ENCODE measurements at regions of chr3 and their contacts with region 1.

Region 1: DNA sequence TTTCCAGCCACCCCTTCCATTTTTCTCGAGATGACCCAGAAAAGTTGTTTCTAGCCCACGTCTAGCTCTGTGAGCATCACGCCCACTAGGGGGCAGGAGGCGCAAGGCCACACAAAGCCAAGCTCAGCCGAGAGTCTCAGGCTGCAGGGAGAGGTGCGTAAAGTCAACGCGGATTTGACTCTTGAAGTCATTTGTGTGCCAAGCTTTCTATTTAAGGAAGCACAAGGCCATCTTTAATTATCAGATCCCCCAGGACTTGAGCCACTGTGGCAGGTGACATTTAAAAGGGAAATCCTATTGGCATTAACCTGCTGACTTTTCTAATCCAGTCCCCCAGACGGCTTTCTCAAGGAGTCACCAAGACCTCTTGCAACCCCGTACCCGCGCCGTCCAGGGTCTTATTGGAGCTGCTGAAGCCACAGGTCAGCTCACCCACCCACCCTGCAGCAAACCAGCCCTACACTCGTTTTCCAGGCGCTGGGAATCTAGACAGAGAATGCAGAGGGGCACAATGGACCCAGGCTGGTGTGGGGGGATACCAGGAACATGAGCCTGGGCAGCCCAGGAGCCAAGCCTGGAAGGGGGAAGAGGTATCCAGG is 62.1 kb downstream of the CAPN7 start:
- DNase-seq: peak; percentile 90
- H3K4me3 Mint-ChIP-seq: no peak overlapping the region
- H3K27ac Mint-ChIP-seq: no peak overlapping the region
- H3K4me1 Mint-ChIP-seq: peaks cover 67% of the 10 kb centered on the region
- H3K27me3 Mint-ChIP-seq: no peaks in the 10 kb centered on the region

Region 2: GRCh38 chr3:15246186-15246585 is 21.9 kb before region 1 on chr3:
- CTCF ChIA-PET with region 1: no interaction called
- DNase-seq: no peak
- H3K4me3 Mint-ChIP-seq: no peak overlapping the region
- H3K27ac Mint-ChIP-seq: no peak overlapping the region
- H3K4me1 Mint-ChIP-seq: peaks cover 5% of the 10 kb centered on the region
- H3K27me3 Mint-ChIP-seq: no peaks in the 10 kb centered on the region

Region 3: DNA sequence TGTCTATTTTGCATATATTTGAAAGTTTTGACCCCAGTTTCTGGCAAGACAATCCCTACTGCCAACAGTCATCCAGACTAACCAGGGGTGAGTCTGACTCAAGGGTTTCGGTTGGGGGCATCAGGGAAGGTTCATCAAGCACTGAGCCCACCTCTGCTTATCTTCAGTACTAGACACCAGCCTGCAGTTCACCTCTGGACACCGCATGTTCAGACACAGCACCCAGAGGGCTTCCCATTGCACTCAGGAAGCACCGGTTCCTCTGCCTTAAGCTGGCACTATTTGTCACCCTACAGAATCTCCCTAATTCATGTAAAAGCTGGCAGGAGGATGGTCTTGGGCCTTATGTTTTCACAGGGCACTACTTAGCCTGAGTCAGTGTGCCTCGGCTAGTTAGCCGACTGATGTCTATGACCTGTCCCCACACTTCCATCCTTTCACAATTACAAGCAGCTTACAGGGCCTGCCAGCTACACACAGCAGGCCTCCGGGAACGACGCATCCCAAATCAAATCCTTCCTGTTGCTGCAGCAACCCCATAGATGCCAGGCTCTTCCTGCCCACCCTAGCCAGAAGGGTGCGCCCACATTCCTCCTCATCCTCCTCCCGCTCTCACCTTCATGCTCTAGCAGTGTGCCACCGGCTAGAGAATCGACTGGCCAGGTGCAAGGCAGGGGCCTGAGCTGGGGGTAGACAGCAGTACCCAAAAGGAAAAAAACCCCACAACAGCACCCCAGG is 11.7 kb after region 1 on chr3:
- CTCF ChIA-PET with region 1: interaction called, 18 read pairs
- DNase-seq: no peak
- H3K4me3 Mint-ChIP-seq: no peak overlapping the region
- H3K27ac Mint-ChIP-seq: no peak overlapping the region
- H3K4me1 Mint-ChIP-seq: peaks cover 52% of the 10 kb centered on the region
- H3K27me3 Mint-ChIP-seq: peaks cover 4% of the 10 kb centered on the region

Region 4: GRCh38 chr3:15309662-15310335 is 41.7 kb after region 1 on chr3:
- CTCF ChIA-PET with region 1: interaction called, 14 read pairs
- DNase-seq: no peak
- H3K4me3 Mint-ChIP-seq: no peak overlapping the region
- H3K27ac Mint-ChIP-seq: peak overlapping the region; percentile 93
- H3K4me1 Mint-ChIP-seq: peaks cover 76% of the 10 kb centered on the region
- H3K27me3 Mint-ChIP-seq: no peaks in the 10 kb centered on the region

Region 5: DNA sequence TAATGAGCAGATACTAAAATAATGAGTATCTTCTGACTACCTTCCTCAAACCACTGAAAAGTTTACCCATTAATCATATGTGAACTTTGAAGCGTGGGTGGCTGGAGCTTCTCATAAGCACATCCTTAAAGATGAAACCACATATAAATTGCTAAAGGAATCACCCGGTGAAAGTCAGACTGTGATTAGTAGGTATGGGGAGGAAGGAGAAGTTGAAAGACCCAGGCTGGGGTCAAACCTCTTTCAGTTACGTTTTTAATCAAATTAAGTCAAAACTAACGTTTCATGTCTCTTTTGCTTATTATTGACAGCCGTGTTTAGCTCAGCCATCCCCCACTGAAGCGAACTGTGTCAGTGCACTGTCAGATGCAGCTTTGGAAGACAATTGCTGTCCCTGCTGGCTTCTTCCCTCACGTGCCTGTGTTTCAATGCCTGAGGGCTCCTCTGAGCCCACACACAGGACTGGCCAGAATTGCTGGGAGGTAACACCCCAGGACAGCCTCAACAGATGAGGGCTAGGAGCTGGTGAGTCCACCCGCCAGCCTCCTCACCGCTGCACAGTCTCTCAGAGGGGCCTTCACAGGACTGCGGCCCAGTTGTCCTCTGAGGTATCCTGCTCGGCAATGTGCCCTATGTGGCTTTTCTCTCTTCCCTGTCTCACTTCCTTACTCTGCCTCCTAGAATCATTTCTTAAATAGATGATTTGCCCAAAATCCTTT is 93.5 kb after region 1 on chr3:
- CTCF ChIA-PET with region 1: interaction called, 15 read pairs
- DNase-seq: peak; percentile 46
- H3K4me3 Mint-ChIP-seq: no peak overlapping the region
- H3K27ac Mint-ChIP-seq: peak overlapping the region; percentile 82
- H3K4me1 Mint-ChIP-seq: peaks cover 54% of the 10 kb centered on the region
- H3K27me3 Mint-ChIP-seq: no peaks in the 10 kb centered on the region

Region 6: DNA sequence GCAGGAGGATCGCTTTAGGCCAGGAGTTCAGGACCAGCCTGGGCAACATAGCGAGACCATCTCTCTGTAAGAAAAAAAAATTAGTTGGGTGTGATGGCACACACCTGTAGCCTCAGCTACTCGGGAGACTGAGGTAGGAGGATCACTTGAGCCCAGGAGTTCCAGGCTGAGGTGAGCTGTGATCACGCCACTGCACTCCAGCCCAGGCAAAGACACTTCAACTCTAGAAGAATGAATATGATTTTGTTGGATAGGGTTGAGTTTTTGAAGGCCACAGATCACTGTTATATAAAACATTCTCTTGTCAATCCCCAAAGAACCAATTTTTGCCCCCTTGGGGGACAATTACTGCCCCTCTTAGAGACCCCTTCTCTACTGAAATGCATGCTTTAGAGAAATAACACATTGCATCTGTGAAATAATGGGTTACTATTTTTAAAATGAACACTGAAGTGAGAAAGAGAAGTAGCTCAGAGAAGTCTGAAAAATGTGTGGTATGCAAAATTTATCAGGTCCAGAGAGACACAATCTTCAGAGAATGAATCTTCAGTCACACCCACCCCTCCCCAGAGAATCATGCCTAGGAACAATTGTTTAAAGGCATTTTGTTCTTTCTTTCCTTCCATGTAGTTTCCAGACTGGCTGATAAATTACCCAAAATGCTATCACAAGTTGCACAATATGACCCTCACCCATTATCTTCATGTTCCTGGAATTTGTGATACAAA is 116.5 kb after region 1 on chr3:
- CTCF ChIA-PET with region 1: interaction called, 140 read pairs
- DNase-seq: no peak
- H3K4me3 Mint-ChIP-seq: no peak overlapping the region
- H3K27ac Mint-ChIP-seq: no peak overlapping the region
- H3K4me1 Mint-ChIP-seq: peaks cover 11% of the 10 kb centered on the region
- H3K27me3 Mint-ChIP-seq: no peaks in the 10 kb centered on the region

Region 7: GRCh38 chr3:15557511-15557946 is 289.4 kb after region 1 on chr3:
- CTCF ChIA-PET with region 1: interaction called, 33 read pairs
- DNase-seq: peak; percentile 83
- H3K4me3 Mint-ChIP-seq: no peak overlapping the region
- H3K27ac Mint-ChIP-seq: peak overlapping the region; percentile 68
- H3K4me1 Mint-ChIP-seq: peaks cover 42% of the 10 kb centered on the region
- H3K27me3 Mint-ChIP-seq: no peaks in the 10 kb centered on the region

Measured in activated naive CD4-positive, alpha-beta T cell treated with anti-CD3 and anti-CD28 coated beads, Interleukin-2, amount 10 ng/mL, durations not matched to agents 7 days and 5 days (primary cell).